ENCODE measurements at regions of chr14 and their contacts with region 1.

Region 1: GRCh38 chr14:32202998-32203882 is at the start of gene RNU6-8:
- DNase-seq: peak; percentile 89
- H3K4me3 Mint-ChIP-seq: peak within 1 kb of the TSS; percentile 89
- H3K27ac Mint-ChIP-seq: peak within 1 kb of the TSS; percentile 98
- H3K4me1 Mint-ChIP-seq: peaks cover 46% of the 10 kb centered on the region
- H3K27me3 Mint-ChIP-seq: peaks cover 2% of the 10 kb centered on the region
- total RNA-seq, gene RNU6-8: not detected

Region 2: DNA sequence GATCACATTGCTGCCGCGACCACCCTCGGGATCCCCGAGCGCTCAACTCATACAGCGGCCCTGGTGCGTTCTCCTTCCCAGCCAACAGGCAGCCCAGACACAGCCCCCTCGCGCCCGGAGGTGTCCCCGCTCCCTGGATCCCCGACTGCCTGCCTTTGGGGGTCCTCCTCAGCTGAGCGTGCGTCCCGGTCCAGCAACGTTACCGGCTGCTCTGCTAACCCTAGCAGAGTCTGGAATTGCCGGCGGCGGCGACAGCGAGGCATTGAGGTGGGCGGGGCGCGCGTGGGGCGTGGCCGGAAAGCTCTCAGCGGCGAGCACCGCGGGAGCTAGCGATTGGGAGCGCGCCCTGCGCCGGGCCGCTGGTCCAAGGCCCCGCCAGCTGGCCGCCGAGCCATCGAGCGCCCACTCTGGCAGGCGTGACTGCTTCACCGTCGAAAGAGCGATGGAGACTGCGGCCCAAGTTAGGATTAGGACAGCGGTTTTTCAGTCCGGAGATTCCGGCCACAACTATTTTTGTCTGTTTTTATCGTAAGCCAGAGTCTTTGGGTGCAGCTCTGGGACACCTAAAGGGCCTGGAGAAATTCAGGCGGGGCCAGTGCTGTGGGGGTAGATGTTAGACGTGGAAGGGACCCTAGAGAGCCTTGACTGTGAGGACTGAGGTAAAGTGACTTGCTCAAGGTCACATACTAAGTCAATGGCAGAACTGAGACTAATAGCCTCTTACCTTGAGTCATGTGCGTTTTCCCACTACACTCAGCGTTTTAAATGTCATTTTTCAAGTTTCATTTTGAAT is 782.7 kb before region 1 on chr14 and contains the start of gene HEATR5A:
- CTCF ChIA-PET with region 1: no interaction called
- POLR2A ChIA-PET with region 1: no interaction called
- intact Hi-C with region 1: loop called (anchors 1 kb)
- DNase-seq: peak; percentile 94
- H3K4me3 Mint-ChIP-seq: peak within 1 kb of the TSS; percentile 84
- H3K27ac Mint-ChIP-seq: peak within 1 kb of the TSS; percentile 95
- H3K4me1 Mint-ChIP-seq: peaks cover 23% of the 10 kb centered on the region
- H3K27me3 Mint-ChIP-seq: no peaks in the 10 kb centered on the region
- total RNA-seq, gene HEATR5A: 12.8 to 13.0 TPM

Region 3: DNA sequence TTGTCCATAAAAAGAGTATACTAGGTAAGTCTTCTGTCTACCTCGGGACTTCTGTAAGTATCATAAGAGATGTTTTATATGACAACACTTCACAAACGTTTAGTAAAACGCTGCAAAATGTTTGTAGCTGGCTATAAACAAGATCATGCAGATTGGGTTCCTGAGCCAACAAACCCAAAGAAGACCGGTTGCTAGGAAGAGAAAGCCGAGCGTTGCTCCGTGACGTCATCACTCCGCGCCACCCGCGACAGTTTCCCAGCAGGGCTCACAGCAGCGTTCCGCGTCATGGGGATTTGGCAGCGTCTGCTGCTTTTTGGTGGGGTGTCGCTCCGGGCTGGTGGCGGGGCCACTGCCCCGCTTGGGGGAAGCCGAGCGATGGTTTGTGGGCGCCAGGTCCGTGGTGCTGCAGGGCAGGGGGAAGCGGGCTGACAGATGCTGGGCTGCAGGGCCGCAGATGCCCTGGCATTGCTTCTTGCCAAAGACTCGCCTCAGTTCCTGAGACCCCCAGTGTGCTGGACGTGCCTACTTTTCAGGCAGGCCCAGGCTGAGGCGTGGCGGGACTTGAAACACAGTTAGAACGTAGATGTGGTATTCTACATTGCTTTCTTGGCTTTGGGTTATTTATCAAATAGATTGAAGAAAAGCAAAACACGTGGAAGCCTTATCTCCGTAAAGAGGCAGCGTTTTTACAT is 641.9 kb before region 1 on chr14 and contains the start of gene NUBPL:
- CTCF ChIA-PET with region 1: no interaction called
- POLR2A ChIA-PET with region 1: no interaction called
- intact Hi-C with region 1: loop called (anchors 1 kb)
- DNase-seq: peak; percentile 98
- H3K4me3 Mint-ChIP-seq: peak within 1 kb of the TSS; percentile 95
- H3K27ac Mint-ChIP-seq: peak within 1 kb of the TSS; percentile 93
- H3K4me1 Mint-ChIP-seq: peaks cover 20% of the 10 kb centered on the region
- H3K27me3 Mint-ChIP-seq: peaks cover 1% of the 10 kb centered on the region
- total RNA-seq, gene NUBPL: 6.9 to 9.1 TPM

Region 4: GRCh38 chr14:31937721-31938346 is 265.4 kb before region 1 on chr14:
- CTCF ChIA-PET with region 1: interaction called, 3 read pairs
- POLR2A ChIA-PET with region 1: interaction called, 3 read pairs
- intact Hi-C with region 1: loop called (anchors 2 kb)
- DNase-seq: peak; percentile 91
- H3K4me3 Mint-ChIP-seq: peak overlapping the region; percentile 16
- H3K27ac Mint-ChIP-seq: peak overlapping the region; percentile 80
- H3K4me1 Mint-ChIP-seq: peaks cover 25% of the 10 kb centered on the region
- H3K27me3 Mint-ChIP-seq: no peaks in the 10 kb centered on the region

Region 5: DNA sequence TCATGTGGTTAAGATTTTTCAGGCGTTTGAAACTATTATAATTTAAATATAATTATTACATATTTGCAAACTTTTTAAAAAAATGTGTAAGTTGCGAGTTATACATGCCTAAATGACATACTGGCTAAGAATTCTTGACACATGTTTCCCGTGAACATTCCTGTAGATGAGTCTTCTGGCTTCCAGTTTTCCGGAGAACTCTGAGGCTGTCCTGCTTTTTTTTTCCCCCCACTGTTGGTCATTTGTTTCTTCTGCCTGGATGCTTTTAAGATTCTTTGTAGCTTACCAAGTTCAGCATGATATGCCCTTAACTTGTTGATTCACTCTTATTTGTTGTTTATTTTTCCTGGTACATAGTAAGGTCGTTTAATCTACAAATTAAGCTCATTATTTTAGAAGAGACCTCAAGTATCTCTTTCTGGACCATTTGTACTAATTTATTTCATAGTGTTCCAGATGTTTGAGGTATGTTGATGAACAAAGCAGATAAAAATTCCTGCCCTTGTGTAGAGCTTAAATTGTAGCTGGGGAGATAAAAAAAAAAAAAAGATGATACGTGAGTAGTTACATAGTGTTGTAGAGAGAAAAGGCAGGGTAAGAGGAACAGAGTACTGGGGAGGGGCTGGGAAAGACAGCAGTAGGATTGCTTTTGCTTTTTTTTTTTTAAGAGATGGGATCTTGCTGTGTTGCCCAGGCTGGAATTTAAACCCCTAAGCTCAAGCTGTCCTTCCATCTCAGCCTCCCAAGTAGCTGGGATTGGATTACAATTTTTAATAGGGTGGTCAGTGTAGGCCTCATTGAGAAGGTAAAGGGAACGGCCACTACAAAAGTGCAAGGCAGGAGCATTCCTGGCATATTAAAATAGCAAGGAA is 93.3 kb before region 1 on chr14:
- CTCF ChIA-PET with region 1: no interaction called
- POLR2A ChIA-PET with region 1: no interaction called
- intact Hi-C with region 1: no loop called
- DNase-seq: no peak
- H3K4me3 Mint-ChIP-seq: no peak overlapping the region
- H3K27ac Mint-ChIP-seq: no peak overlapping the region
- H3K4me1 Mint-ChIP-seq: peaks cover 21% of the 10 kb centered on the region
- H3K27me3 Mint-ChIP-seq: no peaks in the 10 kb centered on the region

Region 6: DNA sequence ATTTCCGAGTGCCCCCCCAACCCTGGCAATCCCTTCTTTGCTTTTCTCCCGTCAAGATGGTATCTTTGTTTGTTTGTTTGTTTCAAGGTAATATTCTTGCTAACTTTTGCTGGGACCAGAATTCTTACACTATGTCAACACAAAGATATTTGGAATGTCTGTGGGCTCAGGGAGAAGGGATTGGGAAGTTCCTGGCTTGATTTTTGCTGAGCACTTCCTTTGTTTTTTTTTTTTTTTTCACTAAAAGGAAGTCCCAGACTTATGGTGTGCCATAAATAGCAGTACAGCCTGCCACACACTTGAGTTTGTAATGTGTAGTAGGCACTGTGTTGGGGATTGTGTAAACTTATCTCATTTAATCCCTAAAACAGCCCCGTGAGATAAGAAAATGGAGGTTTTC is 12.6 kb before region 1 on chr14:
- CTCF ChIA-PET with region 1: no interaction called
- POLR2A ChIA-PET with region 1: no interaction called
- intact Hi-C with region 1: loop called (anchors 1 kb)
- DNase-seq: no peak
- H3K4me3 Mint-ChIP-seq: no peak overlapping the region
- H3K27ac Mint-ChIP-seq: no peak overlapping the region
- H3K4me1 Mint-ChIP-seq: peaks cover 10% of the 10 kb centered on the region
- H3K27me3 Mint-ChIP-seq: peaks cover 3% of the 10 kb centered on the region

Region 7: GRCh38 chr14:32939254-32940065 is 736.2 kb after region 1 on chr14:
- CTCF ChIA-PET with region 1: no interaction called
- POLR2A ChIA-PET with region 1: no interaction called
- intact Hi-C with region 1: loop called (anchors 10 kb)
- DNase-seq: peak; percentile 39
- H3K4me3 Mint-ChIP-seq: peak overlapping the region; percentile 71
- H3K27ac Mint-ChIP-seq: no peak overlapping the region
- H3K4me1 Mint-ChIP-seq: peaks cover 10% of the 10 kb centered on the region
- H3K27me3 Mint-ChIP-seq: peaks cover 55% of the 10 kb centered on the region

Measured in activated CD4-positive, alpha-beta memory T cell treated with anti-CD3 and anti-CD28 coated beads for 36 hours (primary cell).